ENCODE measurements at regions of chr7 and their contacts with region 1.

Region 1: DNA sequence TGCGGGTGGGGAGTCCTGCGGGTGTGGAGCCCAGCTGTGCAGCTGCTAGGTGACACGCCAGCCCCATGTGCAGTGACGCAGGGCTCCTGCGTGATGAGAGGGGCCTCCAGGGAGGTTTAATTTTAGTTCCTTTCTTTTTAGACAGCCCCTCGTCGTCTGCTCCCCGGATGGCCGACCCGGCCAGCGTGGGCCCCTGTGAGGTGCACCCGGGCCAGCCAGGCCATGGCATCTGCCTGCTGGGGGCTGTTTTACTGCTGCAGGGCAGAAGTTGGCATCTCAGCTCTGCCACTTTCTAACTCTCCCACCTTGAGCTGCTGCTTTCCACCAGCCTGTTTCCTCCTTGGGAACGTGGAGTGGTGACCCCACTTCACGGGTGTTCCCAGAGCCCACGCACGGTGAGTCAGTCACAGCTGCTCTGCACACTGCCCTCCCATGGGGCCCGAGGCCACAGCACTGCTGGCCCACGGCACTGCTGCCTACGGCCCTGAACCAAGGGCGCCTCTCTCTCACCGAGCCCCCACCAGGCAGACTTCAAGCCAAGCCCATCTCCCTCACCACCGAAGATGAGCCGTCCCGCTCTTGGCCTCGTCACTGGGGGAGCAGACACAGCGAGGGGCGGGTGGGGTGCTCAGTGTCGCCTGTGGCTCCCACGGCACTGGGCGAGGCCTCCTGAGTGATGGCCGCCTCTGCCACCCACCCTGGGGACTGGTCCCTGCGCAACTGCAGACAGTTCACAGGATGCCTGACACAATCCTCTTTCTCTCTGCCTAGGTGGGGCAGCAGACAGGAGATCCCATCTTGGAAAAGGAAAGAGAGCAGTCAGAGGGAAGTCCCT is 21.3 kb downstream of the CYP2W1 start:
- DNase-seq: peak; percentile 70
- ATAC-seq: peak; percentile 81
- H3K4me3 Mint-ChIP-seq: peak overlapping the region; percentile 64
- H3K27ac Mint-ChIP-seq: peak overlapping the region; percentile 70
- H3K4me1 Mint-ChIP-seq: peaks cover 38% of the 10 kb centered on the region
- H3K27me3 Mint-ChIP-seq: no peaks in the 10 kb centered on the region
- CTCF ChIP-seq: no peak

Region 2: GRCh38 chr7:1028031-1028770 is 24.0 kb after region 1 on chr7:
- CTCF ChIA-PET with region 1: interaction called, 3 read pairs
- POLR2A ChIA-PET with region 1: interaction called, 45 read pairs
- intact Hi-C with region 1: loop called (anchors 1 kb)
- DNase-seq: peak; percentile 85
- ATAC-seq: peak; percentile 38
- H3K4me3 Mint-ChIP-seq: peak overlapping the region; percentile 91
- H3K27ac Mint-ChIP-seq: no peak overlapping the region
- H3K4me1 Mint-ChIP-seq: peaks cover 61% of the 10 kb centered on the region
- H3K27me3 Mint-ChIP-seq: no peaks in the 10 kb centered on the region
- CTCF ChIP-seq: no peak

Region 3: GRCh38 chr7:1247527-1248059 is 243.4 kb after region 1 on chr7:
- CTCF ChIA-PET with region 1: no interaction called
- POLR2A ChIA-PET with region 1: no interaction called
- intact Hi-C with region 1: no loop called
- DNase-seq: no peak
- ATAC-seq: no peak
- H3K4me3 Mint-ChIP-seq: no peak overlapping the region
- H3K27ac Mint-ChIP-seq: no peak overlapping the region
- H3K4me1 Mint-ChIP-seq: peaks cover 7% of the 10 kb centered on the region
- H3K27me3 Mint-ChIP-seq: peaks cover 56% of the 10 kb centered on the region
- CTCF ChIP-seq: no peak